HepG2 (cell line): ENCODE measurements at regions of chr12 and their contacts with region 1.

Region 1: GRCh38 chr12:44015335-44015941 is 179.6 kb downstream of the TMEM117 start:
- DNase-seq: peak; percentile 43
- ATAC-seq: peak; percentile 44; the same call in 2 of the 3 replicates
- H3K4me3 ChIP-seq: no peak overlapping the region
- H3K27ac ChIP-seq: no peak overlapping the region
- H3K4me1 ChIP-seq: no peaks in the 10 kb centered on the region
- H3K27me3 ChIP-seq: no peaks in the 10 kb centered on the region
- CTCF ChIP-seq: peak; percentile 62
- EP300 ChIP-seq: no peak
- POLR2A ChIP-seq: no peak
- RAD21 ChIP-seq: 0 out of 2 replicates have a peak, but pooled peaks have one; percentile 25

Region 2: GRCh38 chr12:43869184-43869583 is 146.3 kb before region 1 on chr12:
- CTCF ChIA-PET with region 1: no interaction called
- POLR2A ChIA-PET with region 1: no interaction called
- in situ Hi-C with region 1: no loop called
- intact Hi-C with region 1: no loop called
- DNase-seq: no peak
- ATAC-seq: no peak
- H3K4me3 ChIP-seq: no peak overlapping the region
- H3K27ac ChIP-seq: no peak overlapping the region
- H3K4me1 ChIP-seq: no peaks in the 10 kb centered on the region
- H3K27me3 ChIP-seq: no peaks in the 10 kb centered on the region
- CTCF ChIP-seq: no peak
- EP300 ChIP-seq: no peak
- POLR2A ChIP-seq: no peak
- RAD21 ChIP-seq: no peak

Region 3: GRCh38 chr12:43957732-43958372 is 57.6 kb before region 1 on chr12:
- CTCF ChIA-PET with region 1: interaction called, 3 read pairs
- POLR2A ChIA-PET with region 1: no interaction called
- in situ Hi-C with region 1: no loop called
- intact Hi-C with region 1: loop called (anchors 1 kb)
- DNase-seq: peak; percentile 49
- ATAC-seq: peak; percentile 90
- H3K4me3 ChIP-seq: no peak overlapping the region
- H3K27ac ChIP-seq: no peak overlapping the region
- H3K4me1 ChIP-seq: no peaks in the 10 kb centered on the region
- H3K27me3 ChIP-seq: no peaks in the 10 kb centered on the region
- CTCF ChIP-seq: peak; percentile 79
- EP300 ChIP-seq: no peak
- POLR2A ChIP-seq: no peak
- RAD21 ChIP-seq: peak; percentile 23; the same call in 1 of the 2 replicates

Region 4: DNA sequence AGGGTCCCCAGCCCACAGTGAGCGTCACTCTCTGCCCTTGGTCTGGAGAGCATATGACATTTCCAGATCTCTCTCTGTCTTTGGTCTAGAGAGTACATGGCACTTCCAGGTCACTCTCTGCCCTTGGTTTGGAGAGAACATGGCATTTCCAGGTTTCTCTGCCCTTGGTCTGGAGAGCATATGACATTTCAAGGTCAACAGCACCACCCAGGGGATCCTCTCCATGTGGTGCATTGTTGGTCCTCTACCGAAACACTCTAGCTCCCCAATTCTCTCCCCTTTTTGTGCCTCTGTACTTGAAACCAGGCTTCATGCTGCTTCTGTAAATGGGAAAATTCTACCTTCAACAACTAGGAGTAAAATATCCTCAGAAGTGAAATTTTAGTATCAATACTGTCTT is 461.2 kb after region 1 on chr12:
- CTCF ChIA-PET with region 1: no interaction called
- POLR2A ChIA-PET with region 1: no interaction called
- in situ Hi-C with region 1: no loop called
- intact Hi-C with region 1: loop called (anchors 1 kb)
- DNase-seq: no peak
- ATAC-seq: peak; percentile 40; the same call in 1 of the 3 replicates
- H3K4me3 ChIP-seq: no peak overlapping the region
- H3K27ac ChIP-seq: no peak overlapping the region
- H3K4me1 ChIP-seq: no peaks in the 10 kb centered on the region
- H3K27me3 ChIP-seq: no peaks in the 10 kb centered on the region
- CTCF ChIP-seq: peak; percentile 49
- EP300 ChIP-seq: no peak
- POLR2A ChIP-seq: no peak
- RAD21 ChIP-seq: no peak

Region 5: GRCh38 chr12:44510510-44510909 is 495.1 kb after region 1 on chr12:
- CTCF ChIA-PET with region 1: no interaction called
- POLR2A ChIA-PET with region 1: no interaction called
- in situ Hi-C with region 1: no loop called
- intact Hi-C with region 1: loop called (anchors 1 kb)
- DNase-seq: no peak
- ATAC-seq: peak; percentile 57; the same call in 2 of the 3 replicates
- H3K4me3 ChIP-seq: no peak overlapping the region
- H3K27ac ChIP-seq: no peak overlapping the region
- H3K4me1 ChIP-seq: no peaks in the 10 kb centered on the region
- H3K27me3 ChIP-seq: no peaks in the 10 kb centered on the region
- CTCF ChIP-seq: no peak
- EP300 ChIP-seq: no peak
- POLR2A ChIP-seq: no peak
- RAD21 ChIP-seq: no peak

Region 6: DNA sequence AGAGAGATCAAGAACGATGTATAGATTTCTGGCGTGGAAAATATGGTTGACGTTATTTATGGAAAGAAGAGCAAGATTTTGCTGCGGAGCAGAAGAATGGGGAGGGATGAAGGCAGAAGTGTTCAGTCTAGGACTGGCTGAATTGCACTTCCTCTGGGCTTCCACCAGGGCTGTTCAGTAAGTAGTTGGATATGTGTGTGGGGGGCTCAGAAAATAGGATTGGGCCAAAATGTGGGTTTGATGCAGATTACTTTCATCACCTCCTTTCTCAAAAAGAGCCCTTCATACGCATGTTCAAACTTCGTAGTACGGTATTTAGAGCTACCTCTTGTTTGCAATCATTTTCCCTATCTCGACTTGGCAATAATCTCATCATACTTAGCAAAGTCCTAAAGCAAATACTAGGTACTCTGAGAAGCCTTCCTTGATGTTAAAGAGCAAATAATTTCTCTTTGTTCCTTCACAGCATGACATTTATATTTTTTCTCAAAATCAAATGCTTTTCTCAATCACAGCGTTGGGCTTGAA is 511.3 kb after region 1 on chr12:
- CTCF ChIA-PET with region 1: no interaction called
- POLR2A ChIA-PET with region 1: no interaction called
- in situ Hi-C with region 1: no loop called
- intact Hi-C with region 1: loop called (anchors 5 kb)
- DNase-seq: no peak
- ATAC-seq: peak; percentile 70
- H3K4me3 ChIP-seq: no peak overlapping the region
- H3K27ac ChIP-seq: no peak overlapping the region
- H3K4me1 ChIP-seq: peaks cover 15% of the 10 kb centered on the region
- H3K27me3 ChIP-seq: no peaks in the 10 kb centered on the region
- CTCF ChIP-seq: no peak
- EP300 ChIP-seq: no peak
- POLR2A ChIP-seq: no peak
- RAD21 ChIP-seq: no peak

Region 7: GRCh38 chr12:44930972-44931600 is 915.6 kb after region 1 on chr12:
- CTCF ChIA-PET with region 1: interaction called, 4 read pairs
- POLR2A ChIA-PET with region 1: no interaction called
- in situ Hi-C with region 1: loop called (anchors 25 kb)
- intact Hi-C with region 1: loop called (anchors 1 kb)
- DNase-seq: peak; percentile 49
- ATAC-seq: no peak
- H3K4me3 ChIP-seq: no peak overlapping the region
- H3K27ac ChIP-seq: no peak overlapping the region
- H3K4me1 ChIP-seq: no peaks in the 10 kb centered on the region
- H3K27me3 ChIP-seq: peaks cover 0 to 3% of the 10 kb centered on the region in 2 experiments; a peak in 1 of 5 replicates
- CTCF ChIP-seq: peak; percentile 56
- EP300 ChIP-seq: no peak
- POLR2A ChIP-seq: no peak
- RAD21 ChIP-seq: no peak

Region 8: GRCh38 chr12:44947163-44947562 is 931.7 kb after region 1 on chr12:
- CTCF ChIA-PET with region 1: no interaction called
- POLR2A ChIA-PET with region 1: no interaction called
- in situ Hi-C with region 1: loop called (anchors 25 kb)
- intact Hi-C with region 1: loop called (anchors 5 kb)
- DNase-seq: no peak
- ATAC-seq: no peak
- H3K4me3 ChIP-seq: no peak overlapping the region
- H3K27ac ChIP-seq: no peak overlapping the region
- H3K4me1 ChIP-seq: no peaks in the 10 kb centered on the region
- H3K27me3 ChIP-seq: no peaks in the 10 kb centered on the region
- CTCF ChIP-seq: no peak
- EP300 ChIP-seq: no peak
- POLR2A ChIP-seq: no peak
- RAD21 ChIP-seq: no peak